GM10248 (cell line): ENCODE measurements at regions of chr10 and their contacts with region 1.

Region 1: DNA sequence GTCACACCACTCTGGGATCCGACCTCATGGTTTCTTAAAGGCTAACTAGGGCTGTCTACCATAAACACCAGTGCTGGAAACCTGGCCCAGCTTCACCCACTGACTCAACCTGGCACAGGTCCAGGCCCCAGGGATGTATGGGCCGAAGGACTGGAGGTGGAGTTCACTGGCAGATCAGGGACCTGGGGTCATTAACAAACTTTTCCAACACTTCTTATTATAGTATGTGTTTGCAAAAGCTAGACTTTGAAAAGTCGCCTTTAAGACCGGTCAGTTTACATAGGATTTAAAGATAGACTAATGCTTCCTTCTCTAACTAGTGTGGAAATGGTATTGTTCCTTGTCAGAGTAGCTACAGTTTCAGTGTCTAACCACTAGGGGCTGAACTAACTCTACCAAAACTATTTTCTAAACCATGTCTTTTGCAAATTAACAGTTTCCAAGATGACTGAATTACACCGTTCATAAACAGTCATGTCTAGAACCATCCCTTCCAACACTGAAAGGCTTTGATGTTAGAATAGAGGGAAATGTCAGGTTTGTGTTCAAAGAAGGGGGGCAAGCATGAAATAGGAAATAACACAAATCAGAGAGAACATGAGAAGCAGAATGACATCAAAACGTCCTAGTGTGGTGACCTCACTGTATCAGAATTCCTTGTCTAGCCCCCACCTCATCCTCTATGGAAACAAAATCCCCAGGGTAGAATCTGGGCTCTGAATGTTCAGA is 29.7 kb downstream of the STN1 start:
- DNase-seq: peak; percentile 53
- CTCF ChIP-seq: peak; percentile 77

Region 2: GRCh38 chr10:103578782-103579382 is 309.4 kb before region 1 on chr10:
- CTCF ChIA-PET with region 1: no interaction called
- POLR2A ChIA-PET with region 1: no interaction called
- DNase-seq: peak; percentile 73
- CTCF ChIP-seq: no peak

Region 3: GRCh38 chr10:103874730-103875129 is 13.5 kb before region 1 on chr10:
- CTCF ChIA-PET with region 1: interaction called, 19 read pairs
- POLR2A ChIA-PET with region 1: no interaction called
- DNase-seq: no peak
- CTCF ChIP-seq: no peak

Region 4: GRCh38 chr10:104121520-104122224 is 233.4 kb after region 1 on chr10 and contains the start of gene SFR1:
- CTCF ChIA-PET with region 1: interaction called, 13 read pairs
- POLR2A ChIA-PET with region 1: no interaction called
- DNase-seq: peak; percentile 94
- CTCF ChIP-seq: peak; percentile 65

Region 5: DNA sequence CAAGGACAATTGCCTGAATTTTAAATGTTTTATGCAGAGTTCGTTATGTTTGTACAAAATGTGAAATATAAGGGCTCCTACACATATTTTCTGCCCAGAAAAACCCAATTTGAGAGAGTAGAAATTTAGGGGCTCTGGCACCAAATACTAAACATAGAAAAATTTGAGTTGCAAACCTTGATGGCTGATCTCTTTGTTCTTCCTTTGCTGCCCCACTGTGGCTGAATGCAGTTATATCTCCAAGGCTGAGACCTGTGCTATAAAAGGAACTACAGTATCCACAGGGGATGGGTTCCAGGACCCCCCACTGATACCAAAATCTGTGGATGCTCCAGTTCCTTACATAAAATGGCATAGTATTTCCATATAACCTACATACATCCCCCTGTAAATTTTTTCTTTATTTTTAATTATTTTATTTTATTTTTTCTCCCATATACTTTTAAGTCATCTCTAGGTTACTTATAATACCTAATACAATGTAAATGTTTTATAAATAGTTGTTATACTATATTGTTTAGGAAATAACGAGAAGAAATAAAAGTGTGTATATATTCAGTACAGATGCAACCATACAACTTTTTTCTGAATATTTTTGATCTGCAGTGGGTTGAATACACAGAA is 321.4 kb after region 1 on chr10:
- CTCF ChIA-PET with region 1: interaction called, 11 read pairs
- POLR2A ChIA-PET with region 1: no interaction called
- DNase-seq: peak; percentile 43
- CTCF ChIP-seq: peak; percentile 54